ENCODE measurements at regions of chr9 and their contacts with region 1.

Region 1: DNA sequence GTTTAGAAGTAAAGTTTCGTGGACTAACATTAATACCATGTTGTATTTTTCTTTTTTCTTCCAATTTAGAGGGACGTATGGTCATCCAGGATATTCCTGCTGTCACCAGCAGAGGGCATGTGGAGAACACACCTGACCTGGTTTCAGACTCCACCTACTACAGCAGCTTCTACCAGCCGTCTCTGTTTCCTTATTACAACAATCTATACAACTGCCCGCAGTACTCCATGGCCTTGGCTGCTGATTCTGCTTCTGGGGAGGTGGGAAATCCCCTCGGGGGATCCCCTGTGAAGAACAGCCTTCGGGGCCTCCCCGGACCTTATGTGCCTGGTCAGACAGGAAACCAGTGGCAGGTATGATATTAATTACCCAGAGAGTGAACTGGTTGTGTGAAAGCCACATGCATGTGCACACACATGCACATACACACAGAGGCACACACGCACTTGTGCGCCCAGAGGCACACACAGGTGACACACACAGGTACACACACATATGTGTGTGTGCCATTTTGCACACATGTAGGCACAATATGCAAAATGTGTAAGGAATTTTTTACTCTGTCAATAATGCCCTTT is 52.4 kb downstream of the DMRT1 start:
- DNase-seq: peak; percentile 83
- H3K4me3 Mint-ChIP-seq: no peak overlapping the region
- H3K27ac Mint-ChIP-seq: no peak overlapping the region
- H3K4me1 Mint-ChIP-seq: peaks cover 7% of the 10 kb centered on the region
- H3K27me3 Mint-ChIP-seq: peaks cover 15% of the 10 kb centered on the region

Region 2: DNA sequence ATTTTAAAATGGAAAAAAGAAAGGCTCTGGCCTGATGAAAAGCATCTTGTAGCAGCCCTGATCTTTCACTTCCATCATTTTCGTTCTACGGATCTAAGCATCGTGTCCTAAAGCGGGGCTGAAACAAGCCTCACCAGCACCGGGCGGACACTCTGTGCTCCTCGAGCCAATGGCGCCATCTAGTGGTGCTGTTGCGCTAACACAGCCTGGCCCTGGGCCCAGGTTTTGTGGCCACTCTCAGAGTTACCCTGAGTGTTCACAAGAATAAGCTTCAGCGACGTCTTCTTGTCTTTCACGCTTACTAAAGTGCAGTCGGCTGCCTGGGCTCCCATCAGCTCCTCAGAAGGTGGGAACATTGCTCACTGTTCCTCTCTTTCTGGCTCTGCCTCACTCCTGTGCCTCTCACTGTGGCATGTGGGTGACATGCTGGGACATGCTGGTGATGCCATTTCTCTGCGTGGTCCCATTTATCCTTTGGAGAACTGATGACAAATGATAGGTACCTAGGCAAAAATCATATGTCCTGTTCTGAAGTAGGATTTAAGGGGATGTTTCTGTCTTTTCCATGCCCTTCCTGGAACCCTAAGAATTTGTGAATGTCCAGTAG is 115.3 kb after region 1 on chr9:
- intact Hi-C with region 1: loop called (anchors 1 kb)
- DNase-seq: peak; percentile 93
- H3K4me3 Mint-ChIP-seq: no peak overlapping the region
- H3K27ac Mint-ChIP-seq: no peak overlapping the region
- H3K4me1 Mint-ChIP-seq: peaks cover 7% of the 10 kb centered on the region
- H3K27me3 Mint-ChIP-seq: peaks cover 6% of the 10 kb centered on the region